ENCODE measurements at regions of chr7 and their contacts with region 1.

Region 1: DNA sequence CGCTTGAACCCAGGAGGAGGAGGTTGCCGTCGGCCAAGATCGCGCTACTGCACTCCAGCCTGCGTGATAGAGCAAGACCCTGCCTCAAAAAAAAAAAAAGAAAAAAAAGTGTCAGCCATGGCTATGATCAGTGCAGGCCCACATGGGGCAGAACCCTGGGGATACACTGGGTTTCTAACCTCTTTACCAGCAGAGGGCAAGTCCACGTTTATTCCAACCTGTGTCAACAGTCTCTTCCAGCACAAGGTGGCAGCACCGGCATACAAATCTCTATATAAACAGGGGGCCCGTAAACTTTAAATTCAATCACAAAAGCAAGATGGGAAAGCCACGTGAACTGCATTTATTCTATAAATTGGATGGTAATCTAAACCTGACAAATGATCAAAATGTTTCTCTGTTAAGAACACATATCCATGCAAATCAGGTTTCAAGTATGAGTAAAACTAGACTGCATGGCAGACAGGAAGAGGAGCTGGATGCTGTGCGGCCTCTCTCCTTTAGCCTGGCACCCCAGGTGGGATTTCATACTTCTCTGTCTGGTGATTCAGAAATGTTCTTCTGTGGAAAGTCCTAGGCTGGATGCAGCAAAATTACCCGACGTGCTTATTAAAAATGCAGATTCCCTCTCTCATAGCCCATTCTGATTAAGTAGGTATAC is 60.0 kb upstream of the STEAP1B start:
- DNase-seq: peak; percentile 84
- H3K4me3 ChIP-seq: no peak overlapping the region
- H3K27ac ChIP-seq: peak overlapping the region in 1 of 4 donors; percentile 83
- H3K4me1 ChIP-seq: peaks cover 0 to 30% (median 20%) of the 10 kb centered on the region in 4 donors
- H3K27me3 ChIP-seq: no peaks in the 10 kb centered on the region
- CTCF ChIP-seq: peak; percentile 86 to 90 (median 88)
- EP300 ChIP-seq: no peak
- POLR2A ChIP-seq: no peak

Region 2: DNA sequence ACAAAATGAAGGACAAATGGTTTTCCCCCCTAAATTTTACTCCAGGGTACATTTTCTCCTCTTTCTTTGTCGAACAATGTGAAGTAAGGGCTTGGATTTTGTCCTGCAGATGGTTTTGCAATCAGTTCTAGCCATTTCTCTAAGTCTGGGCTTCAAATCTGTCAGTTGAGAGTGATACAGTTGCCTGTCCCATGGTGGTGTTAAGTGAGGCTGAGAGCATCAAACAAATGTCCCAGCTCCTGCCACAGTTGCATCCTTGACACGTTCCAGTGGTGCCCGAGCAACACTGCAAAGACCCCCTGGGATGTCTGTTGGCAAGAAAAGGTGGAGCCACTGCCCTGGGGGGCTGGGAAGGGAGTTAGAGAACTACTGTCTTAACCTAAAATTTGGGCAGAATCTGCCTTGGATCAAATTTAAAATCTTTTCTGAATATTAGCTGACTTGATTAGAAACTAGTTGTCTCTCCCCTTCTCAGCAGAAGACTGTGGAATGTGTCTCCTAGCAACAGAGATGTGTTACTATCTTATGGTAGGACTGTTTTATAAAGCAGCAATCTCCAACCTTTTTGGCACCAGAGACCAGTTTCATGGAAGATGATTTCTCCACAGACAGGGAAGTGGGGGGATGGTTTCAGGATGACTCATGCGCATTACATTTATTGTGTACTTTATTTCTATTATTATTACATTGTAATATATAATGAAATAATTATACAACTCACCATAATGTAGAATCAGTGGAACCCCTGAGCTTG is 42.0 kb after region 1 on chr7:
- intact Hi-C with region 1: loop called (anchors 5 kb)
- DNase-seq: no peak
- H3K4me3 ChIP-seq: no peak overlapping the region
- H3K27ac ChIP-seq: peak overlapping the region in 2 of 4 donors; percentile 49 to 50
- H3K4me1 ChIP-seq: peaks cover 0 to 37% (median 27%) of the 10 kb centered on the region in 4 donors
- H3K27me3 ChIP-seq: no peaks in the 10 kb centered on the region
- CTCF ChIP-seq: no peak
- EP300 ChIP-seq: no peak
- POLR2A ChIP-seq: no peak

Region 3: DNA sequence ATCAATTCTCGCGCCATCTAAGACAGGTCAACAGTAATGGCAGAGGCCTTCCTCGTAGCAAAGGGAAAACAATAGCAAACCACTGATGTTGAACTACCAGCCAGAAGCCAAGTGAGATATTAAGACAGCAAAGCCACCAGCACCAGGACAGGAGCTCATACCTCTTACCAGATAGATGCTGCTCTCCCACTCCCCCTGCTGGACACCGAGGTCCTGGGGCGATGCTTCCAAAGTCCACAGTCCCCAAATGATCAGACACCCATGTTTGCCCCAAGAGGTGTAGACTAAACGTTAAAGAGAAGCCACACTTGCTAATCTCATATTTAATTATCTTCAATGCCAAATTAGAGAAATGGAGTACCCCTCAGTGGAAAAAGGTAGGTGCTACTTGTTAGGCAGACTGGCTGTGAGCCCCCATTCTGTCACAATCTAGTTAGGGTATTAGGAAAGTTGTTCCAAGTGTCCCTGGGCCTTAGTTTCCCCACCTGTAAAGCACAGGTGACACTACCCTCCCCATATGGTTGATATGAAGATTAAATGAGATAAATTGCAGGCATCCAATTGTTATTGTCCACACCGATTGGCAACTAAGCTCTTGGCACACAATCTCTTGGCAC is 222.8 kb after region 1 on chr7:
- intact Hi-C with region 1: loop called (anchors 1 kb)
- DNase-seq: peak; percentile 77
- H3K4me3 ChIP-seq: no peak overlapping the region
- H3K27ac ChIP-seq: no peak overlapping the region
- H3K4me1 ChIP-seq: peaks cover 0 to 3% (median 0%) of the 10 kb centered on the region in 4 donors
- H3K27me3 ChIP-seq: no peaks in the 10 kb centered on the region
- CTCF ChIP-seq: peak in 3 of 4 experiments; percentile 14 to 72 (median 53)
- EP300 ChIP-seq: no peak
- POLR2A ChIP-seq: no peak

Region 4: GRCh38 chr7:23055582-23056178 is 495.7 kb after region 1 on chr7:
- intact Hi-C with region 1: loop called (anchors 2 kb)
- DNase-seq: no peak
- H3K4me3 ChIP-seq: no peak overlapping the region
- H3K27ac ChIP-seq: no peak overlapping the region
- H3K4me1 ChIP-seq: peaks cover 0 to 4% (median 0%) of the 10 kb centered on the region in 4 donors
- H3K27me3 ChIP-seq: no peaks in the 10 kb centered on the region
- CTCF ChIP-seq: peak; percentile 52 to 85 (median 72)
- EP300 ChIP-seq: no peak
- POLR2A ChIP-seq: no peak